PC-9 (cell line): ENCODE measurements at regions of chr22 and their contacts with region 1.

Region 1: GRCh38 chr22:50604623-50605320 is 4.2 kb downstream of the MAPK8IP2 start:
- DNase-seq: no peak
- H3K4me3 ChIP-seq: no peak overlapping the region
- H3K27ac ChIP-seq: no peak overlapping the region
- H3K4me1 ChIP-seq: no peaks in the 10 kb centered on the region
- H3K27me3 ChIP-seq: peaks cover 82% of the 10 kb centered on the region
- CTCF ChIP-seq: no peak

Region 2: GRCh38 chr22:50456466-50457234 is 148.1 kb before region 1 on chr22:
- CTCF ChIA-PET with region 1: no interaction called
- POLR2A ChIA-PET with region 1: no interaction called
- intact Hi-C with region 1: no loop called
- DNase-seq: no peak
- H3K4me3 ChIP-seq: no peak overlapping the region
- H3K27ac ChIP-seq: no peak overlapping the region
- H3K4me1 ChIP-seq: no peaks in the 10 kb centered on the region
- H3K27me3 ChIP-seq: no peaks in the 10 kb centered on the region
- CTCF ChIP-seq: peak; percentile 54; the same call in 1 of the 2 replicates

Region 3: GRCh38 chr22:50524676-50525389 is 79.9 kb before region 1 on chr22:
- CTCF ChIA-PET with region 1: no interaction called
- POLR2A ChIA-PET with region 1: no interaction called
- intact Hi-C with region 1: no loop called
- DNase-seq: no peak
- H3K4me3 ChIP-seq: peak overlapping the region; percentile 96
- H3K27ac ChIP-seq: peak overlapping the region; percentile 56
- H3K4me1 ChIP-seq: peaks cover 23% of the 10 kb centered on the region
- H3K27me3 ChIP-seq: no peaks in the 10 kb centered on the region
- CTCF ChIP-seq: no peak

Region 4: DNA sequence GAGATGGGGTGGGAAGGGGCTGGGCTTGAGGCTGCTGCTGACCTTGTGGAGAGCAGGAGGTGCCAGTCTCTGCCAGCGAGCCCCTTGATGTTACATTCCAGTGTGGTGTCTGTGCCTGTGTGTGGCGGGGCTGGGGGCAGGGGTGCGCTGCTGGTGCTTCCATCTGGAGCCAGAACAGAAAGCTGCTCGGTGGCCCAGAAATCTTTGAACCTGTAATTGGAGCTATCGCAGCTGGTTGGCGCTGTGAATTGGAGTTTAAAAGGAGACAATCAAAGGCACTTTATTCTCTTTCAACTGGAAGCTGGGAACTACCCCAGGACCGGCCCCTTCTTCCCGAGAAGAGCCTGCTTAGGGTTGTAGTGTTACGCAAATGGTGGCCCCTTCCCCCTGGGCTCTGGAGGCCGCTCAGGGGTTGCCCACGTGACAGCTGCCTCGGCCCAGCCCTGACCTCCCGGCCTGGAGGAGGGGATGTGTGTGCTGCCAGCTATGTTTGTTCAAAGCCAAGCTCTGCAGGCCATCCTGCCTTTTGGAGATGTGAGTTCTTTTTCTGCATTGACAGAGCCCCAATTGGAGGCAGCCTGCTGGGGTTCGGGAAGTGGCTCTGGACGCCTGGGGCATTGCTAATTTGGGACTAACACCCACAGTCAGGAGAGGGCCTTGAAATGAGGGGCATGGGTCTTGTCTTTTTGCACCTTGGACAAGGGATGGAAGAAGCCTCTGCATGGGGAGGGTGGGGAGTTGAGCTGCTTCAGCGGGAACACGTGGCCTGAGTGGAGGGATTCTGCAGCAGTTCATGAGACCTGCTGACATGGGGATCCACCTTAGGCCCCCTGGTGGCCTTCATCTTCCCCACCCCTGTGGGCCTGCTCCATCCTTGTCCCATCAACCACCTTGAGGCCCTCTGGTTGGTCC is 37.2 kb after region 1 on chr22:
- CTCF ChIA-PET with region 1: interaction called, 19 read pairs
- POLR2A ChIA-PET with region 1: no interaction called
- intact Hi-C with region 1: no loop called
- DNase-seq: no peak
- H3K4me3 ChIP-seq: no peak overlapping the region
- H3K27ac ChIP-seq: no peak overlapping the region
- H3K4me1 ChIP-seq: no peaks in the 10 kb centered on the region
- H3K27me3 ChIP-seq: peaks cover 33% of the 10 kb centered on the region
- CTCF ChIP-seq: no peak; the same call in 1 of the 2 replicates

Region 5: DNA sequence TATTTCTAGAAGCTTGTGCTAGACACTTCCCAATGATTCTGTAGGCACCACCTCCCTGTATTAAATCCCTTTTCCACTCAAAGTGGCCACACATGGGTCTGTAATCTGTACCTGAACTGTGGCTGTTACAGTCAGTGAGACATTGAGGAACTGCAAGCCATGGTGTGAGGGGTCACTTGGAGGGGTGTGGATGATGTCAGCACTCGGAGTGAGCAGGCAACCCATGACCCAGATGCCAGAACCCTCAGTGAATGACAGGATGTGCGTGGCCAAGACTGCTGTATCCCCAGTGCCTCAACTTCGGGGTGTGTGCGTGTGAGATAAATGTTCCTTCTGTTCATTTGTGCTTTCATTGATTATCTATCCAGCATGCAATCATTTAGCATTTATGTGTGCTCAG is 53.2 kb after region 1 on chr22:
- CTCF ChIA-PET with region 1: interaction called, 10 read pairs
- POLR2A ChIA-PET with region 1: no interaction called
- intact Hi-C with region 1: no loop called
- DNase-seq: peak in 1 of 2 experiments; percentile 29
- H3K4me3 ChIP-seq: no peak overlapping the region
- H3K27ac ChIP-seq: peak overlapping the region; percentile 83; the same call in 1 of the 2 replicates
- H3K4me1 ChIP-seq: peaks cover 39% of the 10 kb centered on the region
- H3K27me3 ChIP-seq: no peaks in the 10 kb centered on the region
- CTCF ChIP-seq: no peak